Activated CD8-positive, alpha-beta T cell treated with anti-CD3 and anti-CD28 coated beads for 36 hours (primary cell): ENCODE measurements at regions of chr11 and their contacts with region 1.

Region 1: DNA sequence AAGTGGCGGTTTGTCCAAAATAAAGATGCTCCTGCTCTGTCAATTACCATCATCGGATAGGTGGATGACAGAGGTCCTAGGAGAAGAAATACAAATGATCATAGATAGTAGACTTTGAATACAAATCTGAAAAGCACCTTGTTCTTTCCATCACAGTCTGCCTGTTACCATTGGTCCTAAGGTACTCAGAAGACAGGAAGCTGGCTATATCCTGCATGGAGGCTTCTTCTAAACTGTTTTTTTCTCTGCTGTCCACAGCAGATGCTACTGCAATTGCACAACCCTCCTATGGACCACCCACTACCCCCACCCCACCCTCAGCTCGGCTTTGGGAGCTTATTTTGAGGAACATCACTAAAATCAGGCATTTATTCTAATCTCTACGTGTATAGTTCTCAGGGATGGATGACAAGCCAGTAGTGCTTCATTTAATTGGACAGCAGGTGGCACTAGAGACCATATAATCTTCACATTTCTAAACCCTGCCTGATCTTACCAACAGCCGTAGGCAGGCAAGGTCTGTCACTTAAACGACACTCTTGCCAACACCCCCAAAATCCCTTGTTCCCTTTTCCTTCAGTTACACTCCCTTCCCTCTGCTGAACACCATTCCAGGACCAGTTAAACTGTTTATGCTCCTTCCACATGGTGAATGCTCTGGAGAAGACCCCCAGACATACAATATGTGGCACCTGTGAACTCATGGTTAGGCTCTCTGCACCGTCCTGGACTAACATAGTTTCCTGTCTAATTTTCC is 6.6 kb upstream of the PTS start:
- DNase-seq: peak; percentile 54
- ATAC-seq: peak; percentile 100
- H3K4me3 Mint-ChIP-seq: no peak overlapping the region
- H3K27ac Mint-ChIP-seq: no peak overlapping the region
- H3K4me1 Mint-ChIP-seq: peaks cover 5% of the 10 kb centered on the region
- H3K27me3 Mint-ChIP-seq: no peaks in the 10 kb centered on the region
- CTCF ChIP-seq: peak; percentile 62

Region 2: GRCh38 chr11:111808063-111808588 is 411.5 kb before region 1 on chr11:
- CTCF ChIA-PET with region 1: no interaction called
- POLR2A ChIA-PET with region 1: no interaction called
- intact Hi-C with region 1: no loop called
- DNase-seq: no peak
- ATAC-seq: no peak
- H3K4me3 Mint-ChIP-seq: no peak overlapping the region
- H3K27ac Mint-ChIP-seq: no peak overlapping the region
- H3K4me1 Mint-ChIP-seq: no peaks in the 10 kb centered on the region
- H3K27me3 Mint-ChIP-seq: no peaks in the 10 kb centered on the region
- CTCF ChIP-seq: no peak

Region 3: DNA sequence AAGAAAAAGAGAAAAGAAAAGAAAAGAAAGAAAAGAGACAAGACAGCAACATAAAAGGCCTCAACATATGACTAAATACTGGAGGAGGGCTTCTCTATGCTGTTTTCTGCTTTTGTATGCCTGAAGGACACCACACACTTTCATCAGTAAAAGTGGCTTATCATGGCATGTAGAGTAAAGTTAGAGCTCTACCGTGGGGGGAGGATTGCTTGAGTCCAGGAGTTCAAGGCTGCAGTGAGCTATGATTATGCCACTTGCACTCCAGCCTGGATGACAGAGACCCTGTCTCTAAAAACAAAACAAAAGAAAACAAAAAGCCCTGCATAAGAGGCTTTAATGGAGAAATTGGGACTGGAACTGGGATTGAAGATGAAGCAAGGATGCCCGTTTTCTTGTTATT is 12.3 kb after region 1 on chr11:
- CTCF ChIA-PET with region 1: interaction called, 10 read pairs
- POLR2A ChIA-PET with region 1: interaction called, 5 read pairs
- intact Hi-C with region 1: no loop called
- DNase-seq: no peak
- ATAC-seq: no peak
- H3K4me3 Mint-ChIP-seq: no peak overlapping the region
- H3K27ac Mint-ChIP-seq: no peak overlapping the region
- H3K4me1 Mint-ChIP-seq: peaks cover 12% of the 10 kb centered on the region
- H3K27me3 Mint-ChIP-seq: no peaks in the 10 kb centered on the region
- CTCF ChIP-seq: no peak

Region 4: DNA sequence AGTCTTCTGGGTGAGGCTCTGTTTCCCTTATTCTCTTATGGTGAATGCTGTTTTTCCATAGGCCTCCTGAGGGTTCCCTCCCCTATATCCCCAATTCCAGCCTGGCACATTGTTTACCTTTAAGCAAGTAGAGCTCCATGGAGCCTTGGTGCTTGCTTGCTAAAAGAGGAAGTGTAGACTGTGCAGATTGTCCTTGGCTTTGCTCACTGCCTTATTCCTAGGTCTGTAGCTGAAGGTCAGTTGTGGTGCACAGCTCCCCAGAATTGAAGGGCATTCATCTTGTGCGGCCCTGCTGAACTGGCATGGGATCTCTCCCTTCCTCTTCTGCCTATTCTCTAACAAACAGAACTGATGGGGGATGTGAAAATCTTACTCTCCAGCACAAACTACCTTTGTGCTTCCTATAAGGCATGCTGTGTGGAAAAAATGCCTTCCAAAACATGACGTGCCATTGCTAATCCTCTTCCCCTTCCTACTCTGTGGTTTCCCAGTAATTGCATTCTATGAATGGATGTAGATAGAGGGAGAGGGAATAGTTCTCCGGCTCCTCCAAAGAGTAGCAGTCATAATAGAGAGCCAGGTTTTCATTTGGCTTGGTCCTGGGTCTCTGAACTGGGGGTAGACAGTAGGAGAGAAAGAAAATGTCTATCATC is 75.2 kb after region 1 on chr11:
- CTCF ChIA-PET with region 1: no interaction called
- POLR2A ChIA-PET with region 1: no interaction called
- intact Hi-C with region 1: no loop called
- DNase-seq: no peak
- ATAC-seq: no peak
- H3K4me3 Mint-ChIP-seq: no peak overlapping the region
- H3K27ac Mint-ChIP-seq: no peak overlapping the region
- H3K4me1 Mint-ChIP-seq: peaks cover 27% of the 10 kb centered on the region
- H3K27me3 Mint-ChIP-seq: no peaks in the 10 kb centered on the region
- CTCF ChIP-seq: no peak

Region 5: DNA sequence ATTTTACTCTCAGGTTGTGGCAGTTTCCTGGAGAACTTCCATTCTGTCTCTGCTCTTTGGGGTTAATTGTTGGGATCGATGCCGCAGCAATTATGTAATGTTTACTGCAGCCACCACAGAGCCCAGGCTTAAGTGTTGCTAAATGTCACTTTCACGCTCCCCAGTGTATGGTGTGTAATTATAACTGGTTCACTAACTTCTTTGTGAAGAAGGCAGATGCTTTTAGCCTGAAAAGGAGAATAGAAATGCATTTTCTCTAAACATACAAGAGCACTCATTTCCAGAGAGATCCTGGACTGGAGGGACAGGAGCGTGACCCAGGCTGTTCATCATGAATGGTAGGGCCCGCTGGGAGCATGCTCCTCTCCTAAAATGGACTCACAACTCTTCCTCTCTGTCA is 173.2 kb after region 1 on chr11:
- CTCF ChIA-PET with region 1: no interaction called
- POLR2A ChIA-PET with region 1: no interaction called
- intact Hi-C with region 1: no loop called
- DNase-seq: no peak
- ATAC-seq: no peak
- H3K4me3 Mint-ChIP-seq: no peak overlapping the region
- H3K27ac Mint-ChIP-seq: no peak overlapping the region
- H3K4me1 Mint-ChIP-seq: no peaks in the 10 kb centered on the region
- H3K27me3 Mint-ChIP-seq: peaks cover 11% of the 10 kb centered on the region
- CTCF ChIP-seq: no peak

Region 6: DNA sequence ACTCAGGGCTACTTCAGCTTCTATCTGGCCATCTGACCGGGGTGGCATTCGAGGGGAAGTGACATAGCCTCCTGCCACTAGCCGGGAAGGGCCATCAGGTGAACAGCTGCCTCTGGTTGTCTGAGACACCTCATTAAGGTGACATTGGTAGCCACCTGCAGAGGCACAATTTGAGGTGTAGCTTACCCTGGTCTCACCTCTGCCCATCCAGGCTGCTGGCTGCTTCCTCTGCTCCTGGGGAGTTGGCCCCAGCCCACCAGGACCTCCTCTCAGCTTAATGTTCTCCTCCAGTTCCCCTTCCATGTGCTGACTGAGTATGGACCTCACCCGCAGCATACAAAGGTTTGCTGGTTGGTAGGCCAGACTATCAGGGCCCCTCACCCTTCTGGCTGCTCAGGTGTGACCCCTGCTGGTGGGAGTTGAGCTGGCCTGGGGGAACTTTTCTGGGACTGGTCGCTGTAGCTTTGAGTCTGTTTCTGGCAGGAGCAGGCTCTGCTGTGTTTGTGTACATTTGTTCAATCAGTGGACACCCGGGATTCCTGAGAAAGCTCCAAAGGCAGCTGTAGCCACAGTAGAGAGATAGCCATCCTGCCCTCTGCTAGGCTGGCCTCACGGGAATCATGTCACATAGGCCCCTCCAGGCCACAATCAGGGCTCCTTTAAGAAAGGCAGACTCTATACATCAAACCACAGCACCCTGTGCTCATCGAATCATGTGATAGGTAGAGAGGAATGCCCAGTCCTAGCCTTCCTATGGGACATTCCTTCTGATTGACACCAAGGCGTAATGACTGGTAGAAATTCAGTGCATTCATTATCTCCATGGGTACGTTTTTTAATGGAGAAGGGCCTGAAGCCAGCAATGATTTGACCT is 336.1 kb after region 1 on chr11:
- CTCF ChIA-PET with region 1: interaction called, 7 read pairs
- POLR2A ChIA-PET with region 1: no interaction called
- intact Hi-C with region 1: loop called (anchors 10 kb)
- DNase-seq: peak; percentile 71
- ATAC-seq: peak; percentile 82
- H3K4me3 Mint-ChIP-seq: no peak overlapping the region
- H3K27ac Mint-ChIP-seq: no peak overlapping the region
- H3K4me1 Mint-ChIP-seq: no peaks in the 10 kb centered on the region
- H3K27me3 Mint-ChIP-seq: peaks cover 6% of the 10 kb centered on the region
- CTCF ChIP-seq: peak; percentile 67

Region 7: GRCh38 chr11:112670806-112671570 is 451.3 kb after region 1 on chr11:
- CTCF ChIA-PET with region 1: no interaction called
- POLR2A ChIA-PET with region 1: no interaction called
- intact Hi-C with region 1: no loop called
- DNase-seq: no peak
- ATAC-seq: no peak
- H3K4me3 Mint-ChIP-seq: no peak overlapping the region
- H3K27ac Mint-ChIP-seq: no peak overlapping the region
- H3K4me1 Mint-ChIP-seq: no peaks in the 10 kb centered on the region
- H3K27me3 Mint-ChIP-seq: peaks cover 5% of the 10 kb centered on the region
- CTCF ChIP-seq: no peak